AG04450 (cell line): ENCODE measurements at regions of chr3 and their contacts with region 1.

Region 1: DNA sequence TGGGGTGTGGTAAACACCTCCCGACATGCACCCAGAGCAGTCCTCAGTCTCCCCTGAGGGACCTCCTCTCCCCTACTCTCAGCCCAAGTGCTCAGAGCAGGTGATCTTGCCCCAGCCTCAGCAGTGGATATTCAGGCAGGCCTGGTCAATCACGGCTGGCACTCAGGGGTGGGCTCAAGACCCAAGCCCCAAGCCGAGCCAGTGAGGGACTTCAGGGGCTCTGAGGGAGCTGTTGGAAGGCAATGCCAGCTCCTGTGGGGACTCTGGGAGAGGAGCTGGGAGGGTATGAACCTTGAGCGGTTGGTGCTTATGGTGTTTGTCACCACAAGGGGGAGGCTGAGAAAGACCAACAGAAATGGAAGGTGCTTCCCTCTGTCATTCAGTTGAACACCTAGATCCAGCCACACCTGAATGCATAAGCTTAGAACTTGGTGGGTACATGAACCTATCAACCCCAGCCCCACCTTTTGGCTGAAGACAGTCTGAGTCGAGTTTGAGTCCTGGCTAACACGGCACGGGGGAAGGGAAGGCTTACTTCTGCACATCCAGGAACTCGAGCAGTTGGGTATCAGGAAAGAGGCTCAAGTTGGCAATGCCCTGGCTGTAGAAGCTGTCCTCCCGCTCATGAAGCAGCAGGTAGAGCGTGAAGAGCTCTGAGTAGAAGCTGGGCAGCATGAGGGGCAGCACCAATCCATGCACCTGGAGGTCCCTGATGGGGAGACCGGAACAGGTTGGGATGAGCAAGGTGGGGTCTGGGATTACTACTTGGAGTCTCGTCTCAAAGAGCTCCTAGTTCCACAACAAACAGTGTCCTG is 19.2 kb downstream of the ALS2CL start:
- DNase-seq: no peak
- H3K4me3 ChIP-seq: no peak overlapping the region
- H3K27ac ChIP-seq: no peak overlapping the region
- H3K27me3 ChIP-seq: peaks cover 9% of the 10 kb centered on the region
- CTCF ChIP-seq: peak; percentile 35; the same call in 1 of the 2 replicates

Region 2: GRCh38 chr3:46558184-46559043 is 115.8 kb before region 1 on chr3:
- CTCF ChIA-PET with region 1: interaction called, 10 read pairs
- POLR2A ChIA-PET with region 1: no interaction called
- DNase-seq: peak; percentile 64
- H3K4me3 ChIP-seq: peak overlapping the region; percentile 34
- H3K27ac ChIP-seq: peak overlapping the region; percentile 59
- H3K27me3 ChIP-seq: no peaks in the 10 kb centered on the region
- CTCF ChIP-seq: peak; percentile 61